T-cell (primary cell): ENCODE measurements at regions of chr3 and their contacts with region 1.

Region 1: DNA sequence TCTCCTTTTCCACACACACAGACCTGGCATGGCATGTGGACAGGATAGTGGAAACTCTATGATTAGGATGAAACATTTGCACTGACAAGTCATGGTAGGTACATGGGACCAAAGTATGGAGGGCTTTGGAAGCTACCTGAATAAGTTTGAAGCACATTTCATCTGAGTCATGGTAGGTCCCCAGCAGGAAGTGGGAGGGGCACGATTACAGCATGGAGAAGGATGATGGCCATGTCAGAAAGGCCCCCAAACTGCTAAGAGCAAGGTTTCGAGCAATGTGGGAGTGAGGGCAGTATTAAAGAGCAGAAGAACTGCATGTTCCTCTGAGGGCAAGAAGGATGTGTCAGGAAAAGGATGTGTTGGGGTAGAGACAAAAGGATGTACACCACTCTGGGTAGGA is 51.5 kb upstream of the CSTA start:
- DNase-seq: peak in 2 of 35 experiments; percentile 3 to 8
- ATAC-seq: peak in 2 of 4 experiments; percentile 18 to 36
- H3K4me3 ChIP-seq: no peak overlapping the region
- H3K4me3 Mint-ChIP-seq: peak overlapping the region in 1 of 3 donors; percentile 8
- H3K27ac ChIP-seq: no peak overlapping the region
- H3K27ac Mint-ChIP-seq: no peak overlapping the region
- H3K4me1 ChIP-seq: peaks cover 14 to 33% of the 10 kb centered on the region in 2 experiments
- H3K4me1 Mint-ChIP-seq: peaks cover 30 to 36% (median 36%) of the 10 kb centered on the region in 3 donors
- H3K27me3 ChIP-seq: no peaks in the 10 kb centered on the region
- H3K27me3 Mint-ChIP-seq: no peaks in the 10 kb centered on the region

Region 2: DNA sequence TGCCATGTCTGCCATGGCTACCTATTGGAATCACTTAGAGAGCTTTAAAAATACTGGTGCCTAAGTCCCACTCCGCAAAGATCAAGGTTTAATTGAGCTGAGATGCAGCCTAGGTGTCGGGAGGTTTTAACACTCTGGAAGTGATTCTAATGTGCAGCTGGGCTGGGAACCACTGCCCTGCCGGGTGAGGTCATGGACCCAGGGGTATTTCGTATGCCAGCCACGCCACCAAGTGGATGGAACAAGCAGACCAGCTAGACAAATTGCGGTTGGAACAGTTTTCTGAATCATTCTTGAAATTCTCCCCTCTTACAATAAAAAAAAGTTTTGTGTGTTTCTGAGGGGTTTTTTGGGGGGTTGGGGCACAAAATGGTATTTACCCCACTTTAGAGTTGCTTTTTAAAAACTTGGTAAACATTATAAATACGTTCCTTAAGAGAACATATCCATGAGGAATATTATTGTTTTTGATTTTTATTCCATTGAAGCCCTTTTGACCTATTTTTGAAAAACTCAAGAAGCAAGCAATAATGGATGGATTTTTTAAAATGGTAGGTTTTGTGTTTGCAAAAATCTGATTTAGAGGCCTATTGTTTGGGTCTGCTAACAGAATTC is 14.6 kb before region 1 on chr3:
- CTCF ChIA-PET with region 1: interaction called in 1 of 2 experiments, 11 read pairs
- POLR2A ChIA-PET with region 1: interaction called in 1 of 2 experiments, 8 read pairs
- DNase-seq: peak in 17 of 35 experiments; percentile 5 to 53 (median 11)
- ATAC-seq: no peak
- H3K4me3 ChIP-seq: no peak overlapping the region
- H3K4me3 Mint-ChIP-seq: no peak overlapping the region
- H3K27ac ChIP-seq: no peak overlapping the region
- H3K27ac Mint-ChIP-seq: no peak overlapping the region
- H3K4me1 ChIP-seq: no peaks in the 10 kb centered on the region
- H3K4me1 Mint-ChIP-seq: peaks cover 0 to 5% (median 3%) of the 10 kb centered on the region in 3 donors
- H3K27me3 ChIP-seq: peaks cover 0 to 10% of the 10 kb centered on the region in 2 experiments
- H3K27me3 Mint-ChIP-seq: peaks cover 7 to 22% of the 10 kb centered on the region in 2 donors

Region 3: DNA sequence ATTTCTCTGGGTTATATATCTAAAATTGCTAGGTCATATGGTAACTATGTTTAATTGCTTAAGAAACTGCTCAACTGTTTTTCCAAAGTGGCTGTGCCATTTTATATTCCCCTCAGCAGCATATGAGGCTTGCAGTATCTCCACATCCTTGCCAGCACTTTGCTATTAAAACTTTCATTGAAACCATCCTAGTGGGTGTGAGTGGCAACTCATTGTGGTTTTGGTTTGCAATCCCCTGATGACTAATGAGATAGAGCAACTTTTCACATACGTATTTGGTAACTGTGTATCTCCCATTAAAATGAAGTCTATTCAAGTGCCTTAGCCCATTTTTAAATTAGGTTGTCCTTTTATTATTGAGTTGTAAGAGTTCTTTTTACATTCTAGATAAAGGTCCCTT is 223.9 kb after region 1 on chr3:
- CTCF ChIA-PET with region 1: no interaction called
- POLR2A ChIA-PET with region 1: no interaction called
- DNase-seq: peak in 8 of 35 experiments; percentile 2 to 56 (median 9)
- ATAC-seq: peak; percentile 60 to 84 (median 71)
- H3K4me3 ChIP-seq: no peak overlapping the region
- H3K4me3 Mint-ChIP-seq: no peak overlapping the region
- H3K27ac ChIP-seq: no peak overlapping the region
- H3K27ac Mint-ChIP-seq: no peak overlapping the region
- H3K4me1 ChIP-seq: no peaks in the 10 kb centered on the region
- H3K4me1 Mint-ChIP-seq: peaks cover 52 to 60% (median 56%) of the 10 kb centered on the region in 3 donors
- H3K27me3 ChIP-seq: no peaks in the 10 kb centered on the region
- H3K27me3 Mint-ChIP-seq: no peaks in the 10 kb centered on the region